Mammary epithelial cell (primary cell): ENCODE measurements at regions of chr9 and their contacts with region 1.

Region 1: GRCh38 chr9:33225319-33226149 is 14.4 kb upstream of the SPINK4 start:
- DNase-seq: peak; percentile 63
- H3K4me3 ChIP-seq: no peak overlapping the region
- H3K27ac ChIP-seq: no peak overlapping the region
- H3K4me1 ChIP-seq: peaks cover 49% of the 10 kb centered on the region
- H3K27me3 ChIP-seq: no peaks in the 10 kb centered on the region
- CTCF ChIP-seq: peak; percentile 60 to 61

Region 2: GRCh38 chr9:33007755-33008154 is 217.8 kb before region 1 on chr9:
- CTCF ChIA-PET with region 1: interaction called, 3 read pairs
- dilution Hi-C with region 1: no loop called
- in situ Hi-C with region 1: no loop called
- intact Hi-C with region 1: loop called (anchors 5 kb)
- DNase-seq: no peak
- H3K4me3 ChIP-seq: no peak overlapping the region
- H3K27ac ChIP-seq: no peak overlapping the region
- H3K4me1 ChIP-seq: no peaks in the 10 kb centered on the region
- H3K27me3 ChIP-seq: no peaks in the 10 kb centered on the region
- CTCF ChIP-seq: no peak

Region 3: DNA sequence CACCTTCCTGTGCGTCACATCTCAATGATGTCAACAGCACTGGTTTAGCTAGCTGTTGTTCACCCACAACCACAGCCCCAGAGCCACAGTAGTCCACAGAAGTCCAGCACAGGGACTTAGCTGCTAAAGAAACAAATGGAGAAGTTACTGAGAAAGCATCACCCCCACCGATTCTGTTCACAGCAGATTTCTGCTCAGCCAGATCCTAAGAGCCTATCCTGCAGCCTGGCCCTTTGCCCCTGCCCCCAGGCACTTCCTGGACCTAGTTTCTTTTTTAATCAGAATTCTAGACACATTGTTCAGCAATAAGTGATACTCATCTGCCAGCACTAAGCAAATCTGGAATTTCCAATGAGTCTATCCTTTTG is 65.8 kb before region 1 on chr9:
- CTCF ChIA-PET with region 1: interaction called, 3 read pairs
- dilution Hi-C with region 1: loop called (anchors 5 kb)
- in situ Hi-C with region 1: no loop called
- intact Hi-C with region 1: no loop called
- DNase-seq: peak; percentile 90
- H3K4me3 ChIP-seq: peak overlapping the region in 1 of 3 experiments; percentile 6
- H3K27ac ChIP-seq: peak overlapping the region; percentile 96
- H3K4me1 ChIP-seq: peaks cover 95% of the 10 kb centered on the region
- H3K27me3 ChIP-seq: no peaks in the 10 kb centered on the region
- CTCF ChIP-seq: no peak

Region 4: DNA sequence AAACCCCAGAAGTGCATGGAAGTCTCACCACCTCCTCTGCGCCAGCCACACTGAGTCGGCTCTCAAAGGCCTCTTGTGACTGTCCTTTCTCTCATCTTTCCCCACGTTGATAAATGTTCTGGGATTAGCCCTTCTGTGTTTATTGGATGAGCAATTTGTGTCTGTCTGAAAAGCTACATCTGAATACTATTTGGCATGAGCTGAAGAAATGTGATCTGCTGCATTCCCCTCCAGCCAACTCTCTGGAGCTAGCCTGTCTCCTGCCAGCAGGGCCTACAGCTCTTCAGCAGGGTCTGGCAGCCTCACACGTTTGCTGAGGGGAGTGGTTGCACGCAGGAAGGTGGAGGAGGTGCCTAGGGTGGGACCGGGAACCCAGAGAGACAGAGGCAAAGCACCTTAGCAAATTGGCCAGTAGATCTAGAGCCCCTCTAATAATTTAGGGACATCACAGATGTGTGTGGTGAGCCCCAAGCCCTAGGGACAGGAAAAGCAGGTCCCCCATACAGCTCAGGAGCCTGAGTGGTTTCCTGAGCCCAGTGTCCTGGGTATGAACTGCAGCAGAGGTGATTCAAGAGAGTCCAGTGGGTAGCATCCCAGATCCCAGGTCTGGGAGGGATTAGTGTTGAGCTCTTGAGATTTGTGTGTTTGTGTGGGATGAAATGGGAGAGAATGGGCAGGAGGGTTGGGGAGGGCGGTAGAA is 37.9 kb before region 1 on chr9:
- CTCF ChIA-PET with region 1: no interaction called
- dilution Hi-C with region 1: no loop called
- in situ Hi-C with region 1: no loop called
- intact Hi-C with region 1: no loop called
- DNase-seq: no peak
- H3K4me3 ChIP-seq: no peak overlapping the region
- H3K27ac ChIP-seq: no peak overlapping the region
- H3K4me1 ChIP-seq: peaks cover 30% of the 10 kb centered on the region
- H3K27me3 ChIP-seq: no peaks in the 10 kb centered on the region
- CTCF ChIP-seq: no peak

Region 5: GRCh38 chr9:33290247-33291030 is 64.9 kb after region 1 on chr9 and contains the start of gene NFX1:
- CTCF ChIA-PET with region 1: no interaction called
- dilution Hi-C with region 1: no loop called
- in situ Hi-C with region 1: no loop called
- intact Hi-C with region 1: loop called (anchors 1 kb)
- DNase-seq: peak; percentile 99
- H3K4me3 ChIP-seq: peak within 1 kb of the TSS; percentile 75 to 83 (median 82)
- H3K27ac ChIP-seq: peak within 1 kb of the TSS; percentile 100
- H3K4me1 ChIP-seq: peaks cover 23% of the 10 kb centered on the region
- H3K27me3 ChIP-seq: no peaks in the 10 kb centered on the region
- CTCF ChIP-seq: no peak
- total RNA-seq, gene NFX1: 29.8 to 47.2 TPM

Region 6: DNA sequence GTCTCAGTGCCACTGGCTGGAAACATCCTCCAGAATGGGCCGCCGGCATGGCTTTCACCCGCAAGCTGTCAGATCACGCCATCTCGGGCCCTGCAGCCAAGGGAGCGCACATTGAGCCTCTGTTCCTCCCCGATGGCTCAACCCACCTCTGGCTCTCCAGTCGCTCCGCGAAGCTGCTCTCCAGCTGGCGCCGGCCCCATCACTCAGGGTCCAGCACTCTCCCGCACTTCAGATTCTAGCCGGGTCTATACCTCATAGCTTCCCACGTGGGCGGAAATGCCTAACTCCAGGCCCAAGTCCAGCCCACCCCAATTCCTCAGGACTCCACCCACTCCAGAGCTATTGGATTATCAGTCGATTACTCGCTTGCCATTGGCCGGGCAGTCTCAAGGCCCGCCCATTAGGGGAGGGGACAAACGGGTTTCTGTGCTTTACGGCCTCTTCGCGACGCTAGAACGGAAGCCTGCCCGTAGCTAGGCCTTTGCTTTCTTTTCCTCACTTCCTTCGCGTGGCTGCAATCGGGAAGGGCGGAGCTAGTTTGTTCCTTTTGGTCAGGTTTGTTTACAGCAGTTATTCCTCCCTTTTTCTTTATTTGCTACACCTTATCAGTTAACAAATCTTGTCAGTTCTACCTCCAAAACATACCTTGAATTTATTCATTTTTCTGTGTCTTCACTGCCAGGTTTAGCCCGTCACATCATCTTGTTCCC is 248.3 kb after region 1 on chr9 and contains the start of gene NOL6:
- CTCF ChIA-PET with region 1: no interaction called
- dilution Hi-C with region 1: no loop called
- in situ Hi-C with region 1: loop called in 1 of 2 experiments (anchors 25 kb)
- intact Hi-C with region 1: no loop called
- DNase-seq: peak; percentile 99
- H3K4me3 ChIP-seq: peak within 1 kb of the TSS; percentile 80 to 96 (median 93)
- H3K27ac ChIP-seq: peak within 1 kb of the TSS; percentile 65
- H3K4me1 ChIP-seq: peaks cover 17% of the 10 kb centered on the region
- H3K27me3 ChIP-seq: no peaks in the 10 kb centered on the region
- CTCF ChIP-seq: no peak
- total RNA-seq, gene NOL6: 34.2 to 59.0 TPM